Lower leg skin (tissue), 4 donors: ENCODE measurements at regions of chrX and their contacts with region 1.

Region 1: GRCh38 chrX:12704706-12705105 is 86.5 kb upstream of the PRPS2 start:
- DNase-seq: no peak
- H3K4me3 ChIP-seq: no peak overlapping the region
- CTCF ChIP-seq: no peak
- POLR2A ChIP-seq: no peak

Region 2: DNA sequence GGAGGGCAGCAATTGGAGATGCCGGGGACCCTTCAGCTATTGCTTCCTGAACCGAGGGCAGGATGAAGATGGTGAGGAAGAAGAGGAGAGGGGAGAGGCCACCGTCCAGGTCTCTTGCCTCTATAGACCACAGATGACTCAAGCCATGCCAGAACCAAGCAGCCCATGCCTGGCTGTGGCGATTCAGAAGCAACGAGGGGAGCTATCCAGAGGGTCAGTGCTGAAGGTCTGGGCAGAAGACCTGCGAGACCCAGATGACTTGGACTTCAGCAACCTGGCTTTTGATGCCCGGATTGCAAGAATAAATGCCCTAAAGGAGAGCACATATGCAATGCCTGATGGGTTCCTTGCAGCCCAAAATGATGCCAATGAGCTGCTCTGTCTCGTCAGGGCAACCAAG is 16.3 kb after region 1 on chrX:
- intact Hi-C with region 1: loop called (anchors 1 kb)
- DNase-seq: no peak
- H3K4me3 ChIP-seq: no peak overlapping the region
- CTCF ChIP-seq: no peak
- POLR2A ChIP-seq: no peak